ENCODE measurements at regions of chr14 and their contacts with region 1.

Region 1: DNA sequence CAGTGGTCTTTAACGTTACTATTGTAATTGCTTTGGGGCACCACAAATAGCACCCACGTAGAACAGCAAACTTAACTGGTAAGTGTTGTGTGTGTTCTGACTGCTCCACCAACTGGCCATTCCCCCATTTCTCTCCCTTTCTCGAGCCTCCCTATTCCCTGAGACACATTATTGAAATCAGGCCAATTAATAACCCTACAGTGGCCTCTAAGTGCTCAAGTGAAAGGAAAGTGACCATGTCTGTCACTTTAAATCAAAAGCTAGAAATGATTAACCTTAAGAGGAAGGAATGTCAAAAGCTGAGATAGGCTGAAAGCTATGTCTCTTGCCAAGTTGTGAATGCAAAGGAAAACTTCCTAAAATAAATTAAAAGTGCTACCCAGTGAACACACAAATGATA is 22.3 kb downstream of the PPP1R13B start:
- DNase-seq: peak; percentile 24
- H3K4me3 Mint-ChIP-seq: peak overlapping the region; percentile 44
- H3K27ac Mint-ChIP-seq: peak overlapping the region; percentile 56
- H3K4me1 Mint-ChIP-seq: peaks cover 34% of the 10 kb centered on the region
- H3K27me3 Mint-ChIP-seq: no peaks in the 10 kb centered on the region
- CTCF ChIP-seq: no peak

Region 2: GRCh38 chr14:103624859-103625258 is 200.2 kb before region 1 on chr14:
- CTCF ChIA-PET with region 1: no interaction called
- intact Hi-C with region 1: no loop called
- DNase-seq: peak; percentile 82
- H3K4me3 Mint-ChIP-seq: no peak overlapping the region
- H3K27ac Mint-ChIP-seq: peak overlapping the region; percentile 80
- H3K4me1 Mint-ChIP-seq: peaks cover 29% of the 10 kb centered on the region
- H3K27me3 Mint-ChIP-seq: no peaks in the 10 kb centered on the region
- CTCF ChIP-seq: no peak

Region 3: GRCh38 chr14:103886304-103887169 is 61.4 kb after region 1 on chr14:
- CTCF ChIA-PET with region 1: no interaction called
- intact Hi-C with region 1: no loop called
- DNase-seq: no peak
- H3K4me3 Mint-ChIP-seq: no peak overlapping the region
- H3K27ac Mint-ChIP-seq: no peak overlapping the region
- H3K4me1 Mint-ChIP-seq: peaks cover 16% of the 10 kb centered on the region
- H3K27me3 Mint-ChIP-seq: no peaks in the 10 kb centered on the region
- CTCF ChIP-seq: no peak

Region 4: GRCh38 chr14:103910262-103910935 is 85.3 kb after region 1 on chr14:
- CTCF ChIA-PET with region 1: interaction called, 6 read pairs
- intact Hi-C with region 1: loop called (anchors 1 kb)
- DNase-seq: peak; percentile 92
- H3K4me3 Mint-ChIP-seq: peak overlapping the region; percentile 20
- H3K27ac Mint-ChIP-seq: no peak overlapping the region
- H3K4me1 Mint-ChIP-seq: peaks cover 9% of the 10 kb centered on the region
- H3K27me3 Mint-ChIP-seq: no peaks in the 10 kb centered on the region
- CTCF ChIP-seq: peak; percentile 80

Measured in Calu3 (cell line).